ENCODE measurements at regions of chrX and their contacts with region 1.

Region 1: GRCh38 chrX:106894392-106894909 is 8.7 kb downstream of the RIPPLY1 start:
- DNase-seq: peak; percentile 72 to 73
- H3K4me3 ChIP-seq: no peak overlapping the region
- H3K4me3 Mint-ChIP-seq: no peak overlapping the region
- H3K27ac Mint-ChIP-seq: no peak overlapping the region
- H3K4me1 ChIP-seq: peaks cover 23% of the 10 kb centered on the region
- H3K4me1 Mint-ChIP-seq: peaks cover 13% of the 10 kb centered on the region
- H3K27me3 ChIP-seq: no peaks in the 10 kb centered on the region
- H3K27me3 Mint-ChIP-seq: no peaks in the 10 kb centered on the region
- CTCF ChIP-seq: peak; percentile 78 to 80

Region 2: DNA sequence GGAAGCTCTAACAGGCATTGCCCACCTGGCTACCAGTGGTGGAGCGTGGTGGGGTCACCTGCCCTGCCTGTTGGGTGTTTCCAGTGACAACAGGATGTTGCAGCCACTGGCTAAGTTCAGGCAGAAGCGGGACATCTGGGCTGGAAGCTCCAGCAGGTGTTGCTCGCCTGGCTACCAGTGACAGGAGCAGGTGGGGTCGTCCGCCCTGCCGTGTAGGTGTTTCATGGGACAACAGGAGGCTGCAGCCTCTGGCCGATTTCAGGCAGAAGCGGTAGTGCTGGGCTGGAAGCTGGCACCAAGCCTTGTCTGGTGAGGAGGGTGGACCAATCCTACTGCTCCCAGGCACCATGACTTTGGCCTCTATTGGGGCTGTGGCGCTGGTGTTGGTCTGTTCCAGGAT is 30.8 kb before region 1 on chrX:
- CTCF ChIA-PET with region 1: no interaction called
- POLR2A ChIA-PET with region 1: no interaction called
- intact Hi-C with region 1: no loop called
- DNase-seq: peak in 1 of 2 experiments; percentile 17
- H3K4me3 ChIP-seq: no peak overlapping the region
- H3K4me3 Mint-ChIP-seq: no peak overlapping the region
- H3K27ac Mint-ChIP-seq: no peak overlapping the region
- H3K4me1 ChIP-seq: no peaks in the 10 kb centered on the region
- H3K4me1 Mint-ChIP-seq: no peaks in the 10 kb centered on the region
- H3K27me3 ChIP-seq: no peaks in the 10 kb centered on the region
- H3K27me3 Mint-ChIP-seq: no peaks in the 10 kb centered on the region
- CTCF ChIP-seq: no peak

Region 3: DNA sequence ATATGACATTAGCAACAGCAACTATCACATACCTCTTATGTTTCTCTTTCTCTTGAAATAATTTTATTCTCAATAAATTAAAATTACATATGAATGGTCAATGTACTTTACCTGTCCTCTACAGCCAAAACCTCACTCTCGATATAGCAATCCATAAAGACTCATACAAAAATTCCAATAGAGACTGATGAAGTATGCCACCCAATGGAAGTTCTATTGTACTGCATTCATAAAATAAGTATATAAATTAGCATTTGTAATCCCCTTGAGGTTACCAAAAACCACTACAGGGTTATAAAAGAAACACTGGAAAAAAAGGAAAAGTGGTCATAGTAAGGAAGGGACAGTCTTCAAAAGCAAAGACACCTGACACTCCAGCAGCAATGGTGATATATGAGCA is 58.5 kb after region 1 on chrX:
- CTCF ChIA-PET with region 1: interaction called, 6 read pairs
- POLR2A ChIA-PET with region 1: no interaction called
- intact Hi-C with region 1: loop called (anchors 1 kb)
- DNase-seq: no peak
- H3K4me3 ChIP-seq: no peak overlapping the region
- H3K4me3 Mint-ChIP-seq: no peak overlapping the region
- H3K27ac Mint-ChIP-seq: no peak overlapping the region
- H3K4me1 ChIP-seq: peaks cover 37% of the 10 kb centered on the region
- H3K4me1 Mint-ChIP-seq: peaks cover 21% of the 10 kb centered on the region
- H3K27me3 ChIP-seq: no peaks in the 10 kb centered on the region
- H3K27me3 Mint-ChIP-seq: no peaks in the 10 kb centered on the region
- CTCF ChIP-seq: peak; percentile 19 to 40

Region 4: DNA sequence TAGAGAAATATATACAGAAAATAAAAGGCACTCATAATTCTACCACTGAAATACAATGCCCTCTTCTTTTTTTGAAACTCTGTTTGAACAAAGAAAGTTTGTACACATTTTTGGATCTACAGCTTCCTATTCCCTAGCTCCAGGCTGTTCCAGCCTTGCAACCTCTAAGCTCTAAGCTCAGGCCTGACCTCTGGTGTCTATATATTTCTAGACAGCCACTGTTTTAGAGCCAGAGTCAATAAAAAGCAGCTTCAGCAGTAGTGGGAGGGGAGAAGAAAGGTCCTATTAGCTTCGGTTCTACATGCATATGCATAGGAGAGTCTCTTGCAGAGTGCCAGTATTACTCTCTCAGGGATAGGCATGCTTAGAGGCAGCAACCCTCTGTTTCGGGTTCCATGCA is 65.5 kb after region 1 on chrX:
- CTCF ChIA-PET with region 1: interaction called, 58 read pairs
- POLR2A ChIA-PET with region 1: no interaction called
- intact Hi-C with region 1: loop called (anchors 1 kb)
- DNase-seq: peak; percentile 38 to 49
- H3K4me3 ChIP-seq: no peak overlapping the region
- H3K4me3 Mint-ChIP-seq: no peak overlapping the region
- H3K27ac Mint-ChIP-seq: no peak overlapping the region
- H3K4me1 ChIP-seq: peaks cover 11% of the 10 kb centered on the region
- H3K4me1 Mint-ChIP-seq: peaks cover 11% of the 10 kb centered on the region
- H3K27me3 ChIP-seq: no peaks in the 10 kb centered on the region
- H3K27me3 Mint-ChIP-seq: no peaks in the 10 kb centered on the region
- CTCF ChIP-seq: peak; percentile 23 to 24

Region 5: DNA sequence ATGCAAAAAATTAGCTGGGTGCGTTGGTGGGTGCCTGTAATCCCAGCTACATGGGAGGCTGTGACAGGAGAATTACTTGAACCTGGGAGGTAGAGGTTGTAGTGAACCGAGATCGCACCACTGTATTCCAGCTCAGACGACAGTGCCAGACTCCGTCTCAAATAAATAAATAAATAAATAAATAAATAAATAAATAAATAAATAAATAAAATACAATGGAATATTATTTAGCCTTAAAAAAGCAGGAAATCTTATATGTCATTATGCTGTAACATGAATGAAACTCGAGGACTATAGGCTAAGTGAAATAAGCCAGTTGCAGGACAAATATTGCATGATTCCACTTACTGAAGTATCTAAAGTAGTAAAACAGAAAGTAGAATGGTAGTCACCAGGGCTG is 181.7 kb after region 1 on chrX:
- CTCF ChIA-PET with region 1: no interaction called
- POLR2A ChIA-PET with region 1: no interaction called
- intact Hi-C with region 1: loop called (anchors 10 kb)
- DNase-seq: no peak
- H3K4me3 ChIP-seq: no peak overlapping the region
- H3K4me3 Mint-ChIP-seq: no peak overlapping the region
- H3K27ac Mint-ChIP-seq: no peak overlapping the region
- H3K4me1 ChIP-seq: no peaks in the 10 kb centered on the region
- H3K4me1 Mint-ChIP-seq: no peaks in the 10 kb centered on the region
- H3K27me3 ChIP-seq: no peaks in the 10 kb centered on the region
- H3K27me3 Mint-ChIP-seq: no peaks in the 10 kb centered on the region
- CTCF ChIP-seq: no peak

Measured in Caco-2 (cell line).